GM12878 (cell line): ENCODE measurements at regions of chr22 and their contacts with region 1.

Region 1: GRCh38 chr22:41940832-41941765 is 5.9 kb downstream of the CENPM start:
- DNase-seq: no peak
- ATAC-seq: peak; percentile 60
- H3K4me3 ChIP-seq: 0 out of 2 replicates have a peak overlapping the region, but pooled peaks have one; percentile 4
- H3K27ac ChIP-seq: peak overlapping the region; percentile 94
- H3K4me1 ChIP-seq: peaks cover 66% of the 10 kb centered on the region
- H3K27me3 ChIP-seq: no peaks in the 10 kb centered on the region
- CTCF ChIP-seq: peak; percentile 88 to 97 (median 95)
- EP300 ChIP-seq: peak in 1 of 2 experiments; percentile 11; a peak in 1 of 4 replicates
- POLR2A ChIP-seq: peak; percentile 33; the same call in 1 of the 2 replicates
- RAD21 ChIP-seq: peak; percentile 92

Region 2: GRCh38 chr22:41780746-41781505 is 160.2 kb before region 1 on chr22:
- CTCF ChIA-PET with region 1: interaction called, 6 read pairs
- POLR2A ChIA-PET with region 1: interaction called, 3 read pairs
- RAD21 ChIA-PET with region 1: interaction called, 11 read pairs
- SMC1A ChIA-PET with region 1: interaction called, 3 read pairs
- in situ Hi-C with region 1: no loop called
- intact Hi-C with region 1: no loop called
- DNase-seq: peak; percentile 90
- ATAC-seq: peak; percentile 97
- H3K4me3 ChIP-seq: peak overlapping the region; percentile 76
- H3K27ac ChIP-seq: peak overlapping the region; percentile 54
- H3K4me1 ChIP-seq: peaks cover 11% of the 10 kb centered on the region
- H3K27me3 ChIP-seq: no peaks in the 10 kb centered on the region
- CTCF ChIP-seq: no peak
- EP300 ChIP-seq: peak in 1 of 2 experiments; percentile 34; a peak in 1 of 4 replicates
- POLR2A ChIP-seq: peak; percentile 81
- RAD21 ChIP-seq: no peak

Region 3: GRCh38 chr22:41822317-41823060 is 118.6 kb before region 1 on chr22:
- CTCF ChIA-PET with region 1: interaction called, 17 read pairs
- POLR2A ChIA-PET with region 1: interaction called, 5 read pairs
- RAD21 ChIA-PET with region 1: interaction called, 84 read pairs
- SMC1A ChIA-PET with region 1: interaction called, 10 read pairs
- in situ Hi-C with region 1: no loop called
- intact Hi-C with region 1: loop called (anchors 1 kb)
- DNase-seq: peak; percentile 47
- ATAC-seq: peak; percentile 92
- H3K4me3 ChIP-seq: no peak overlapping the region
- H3K27ac ChIP-seq: no peak overlapping the region
- H3K4me1 ChIP-seq: no peaks in the 10 kb centered on the region; the same call in 1 of the 2 replicates
- H3K27me3 ChIP-seq: no peaks in the 10 kb centered on the region
- CTCF ChIP-seq: peak; percentile 55 to 67 (median 59); a peak in 5 of 6 replicates
- EP300 ChIP-seq: no peak
- POLR2A ChIP-seq: no peak
- RAD21 ChIP-seq: peak; percentile 82

Region 4: DNA sequence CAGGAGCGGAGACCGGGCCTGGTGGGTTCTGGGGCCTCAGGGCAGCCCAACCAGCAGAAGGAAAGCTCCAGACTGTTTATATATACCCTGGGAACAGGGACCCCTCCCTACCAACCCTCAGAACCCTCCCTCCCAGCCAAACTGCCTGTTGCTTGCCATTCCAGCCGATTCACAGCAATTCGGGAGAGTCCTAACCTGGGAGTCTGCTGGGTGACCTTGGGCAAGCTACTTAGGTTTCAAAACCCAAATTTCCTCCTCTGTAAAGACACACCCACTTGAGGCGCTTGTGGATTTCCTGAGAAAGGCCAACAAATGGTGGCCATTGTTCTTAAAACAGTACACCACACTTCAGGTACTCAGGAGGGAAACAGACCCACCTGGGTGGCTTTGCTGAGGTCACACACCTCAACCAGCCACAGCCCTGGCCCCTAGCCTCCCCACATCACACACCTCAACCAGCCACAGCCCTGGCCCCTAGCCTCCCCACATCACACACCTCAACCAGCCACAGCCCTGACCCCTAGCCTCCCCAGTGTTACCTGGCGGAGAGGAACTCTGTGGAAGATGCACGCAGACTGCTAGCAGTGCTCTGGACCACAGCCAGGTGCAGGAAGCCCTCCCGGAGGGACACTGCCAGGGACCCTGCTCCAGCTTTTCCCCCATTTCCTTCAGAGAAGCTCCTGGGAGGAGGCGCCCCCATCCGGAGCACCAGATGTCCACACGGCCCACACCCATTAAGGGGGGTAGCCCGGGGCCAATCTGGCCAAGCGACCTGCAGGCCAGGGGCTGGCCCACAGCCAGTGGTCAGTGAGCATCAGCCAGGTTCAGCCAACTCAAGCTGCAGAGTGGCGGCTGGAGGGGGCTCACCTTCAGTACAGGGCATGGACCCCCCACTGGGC is 32.4 kb before region 1 on chr22:
- CTCF ChIA-PET with region 1: interaction called, 5 read pairs
- POLR2A ChIA-PET with region 1: interaction called, 10 read pairs
- RAD21 ChIA-PET with region 1: interaction called, 40 read pairs
- SMC1A ChIA-PET with region 1: interaction called, 15 read pairs
- in situ Hi-C with region 1: no loop called
- intact Hi-C with region 1: no loop called
- DNase-seq: no peak
- ATAC-seq: peak; percentile 24
- H3K4me3 ChIP-seq: no peak overlapping the region
- H3K27ac ChIP-seq: no peak overlapping the region
- H3K4me1 ChIP-seq: peaks cover 12% of the 10 kb centered on the region
- H3K27me3 ChIP-seq: peaks cover 4 to 12% of the 10 kb centered on the region in 2 experiments; a peak in 3 of 4 replicates
- CTCF ChIP-seq: no peak
- EP300 ChIP-seq: no peak
- POLR2A ChIP-seq: peak; percentile 38; the same call in 1 of the 2 replicates
- RAD21 ChIP-seq: no peak

Region 5: GRCh38 chr22:41925655-41926460 is 15.2 kb before region 1 on chr22:
- CTCF ChIA-PET with region 1: interaction called, 234 read pairs
- POLR2A ChIA-PET with region 1: interaction called, 599 read pairs
- RAD21 ChIA-PET with region 1: interaction called, 408 read pairs
- SMC1A ChIA-PET with region 1: interaction called, 321 read pairs
- in situ Hi-C with region 1: no loop called
- intact Hi-C with region 1: loop called (anchors 1 kb)
- DNase-seq: no peak
- ATAC-seq: peak; percentile 59
- H3K4me3 ChIP-seq: peak overlapping the region; percentile 97
- H3K27ac ChIP-seq: peak overlapping the region; percentile 93
- H3K4me1 ChIP-seq: peaks cover 53% of the 10 kb centered on the region
- H3K27me3 ChIP-seq: no peaks in the 10 kb centered on the region
- CTCF ChIP-seq: peak; percentile 78 to 87 (median 79)
- EP300 ChIP-seq: no peak
- POLR2A ChIP-seq: peak; percentile 54; the same call in 1 of the 2 replicates
- RAD21 ChIP-seq: peak; percentile 50